ENCODE measurements at regions of chr2 and their contacts with region 1.

Region 1: GRCh38 chr2:37832590-37833197 is 92.4 kb upstream of the RMDN2 start:
- DNase-seq: peak; percentile 84
- H3K4me3 Mint-ChIP-seq: no peak overlapping the region
- H3K27ac Mint-ChIP-seq: no peak overlapping the region
- H3K4me1 Mint-ChIP-seq: peaks cover 37% of the 10 kb centered on the region
- H3K27me3 Mint-ChIP-seq: peaks cover 4% of the 10 kb centered on the region

Region 2: GRCh38 chr2:37397166-37397565 is 435.5 kb before region 1 on chr2:
- CTCF ChIA-PET with region 1: interaction called, 88 read pairs
- POLR2A ChIA-PET with region 1: no interaction called
- DNase-seq: no peak
- H3K4me3 Mint-ChIP-seq: no peak overlapping the region
- H3K27ac Mint-ChIP-seq: no peak overlapping the region
- H3K4me1 Mint-ChIP-seq: peaks cover 1% of the 10 kb centered on the region
- H3K27me3 Mint-ChIP-seq: peaks cover 5% of the 10 kb centered on the region

Region 3: DNA sequence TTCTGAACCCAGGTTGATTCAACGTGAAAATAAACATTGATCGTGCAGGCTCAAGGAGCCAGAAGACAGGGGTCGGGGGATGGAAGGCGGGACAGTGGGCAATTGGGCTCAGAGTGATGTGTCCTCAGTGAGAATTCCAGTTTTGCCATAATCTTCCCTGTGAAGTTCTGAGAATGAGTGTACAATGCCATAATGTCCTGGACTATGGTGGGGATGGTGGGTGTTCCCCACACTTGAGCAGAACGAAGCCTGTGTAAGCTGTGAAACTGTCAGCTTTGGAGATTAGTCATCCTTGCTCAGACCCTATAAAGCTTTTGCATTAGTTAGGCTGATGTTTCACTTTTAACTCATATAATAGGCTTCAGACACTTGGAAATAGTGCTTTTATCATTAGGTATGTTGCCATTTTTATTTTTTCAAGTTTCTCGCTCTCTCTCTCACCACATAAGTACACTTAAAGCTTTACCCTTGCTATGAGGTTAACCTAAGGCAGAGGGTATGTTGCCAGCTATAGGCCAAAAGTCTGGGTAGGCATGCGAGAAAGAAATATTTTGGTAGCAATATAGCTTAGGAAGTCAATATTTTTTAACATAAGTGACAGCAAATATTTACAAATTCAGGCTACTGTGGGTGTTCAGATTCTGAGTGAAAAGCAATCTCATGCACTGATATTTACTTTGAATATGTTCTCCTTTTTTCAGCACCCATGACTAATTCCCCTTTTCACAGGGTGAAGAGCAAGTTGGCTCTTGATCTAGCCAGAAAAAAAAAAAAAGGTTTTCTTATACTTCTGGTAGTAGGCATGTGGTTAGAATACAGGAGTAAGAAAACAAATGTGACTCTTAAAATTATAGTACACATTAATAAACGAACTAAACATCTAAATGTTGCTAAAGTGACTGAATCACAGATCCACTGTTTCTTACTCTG is 208.5 kb before region 1 on chr2:
- CTCF ChIA-PET with region 1: interaction called, 11 read pairs
- POLR2A ChIA-PET with region 1: no interaction called
- DNase-seq: peak; percentile 33
- H3K4me3 Mint-ChIP-seq: peak overlapping the region; percentile 28
- H3K27ac Mint-ChIP-seq: peak overlapping the region; percentile 91
- H3K4me1 Mint-ChIP-seq: peaks cover 53% of the 10 kb centered on the region
- H3K27me3 Mint-ChIP-seq: no peaks in the 10 kb centered on the region

Region 4: DNA sequence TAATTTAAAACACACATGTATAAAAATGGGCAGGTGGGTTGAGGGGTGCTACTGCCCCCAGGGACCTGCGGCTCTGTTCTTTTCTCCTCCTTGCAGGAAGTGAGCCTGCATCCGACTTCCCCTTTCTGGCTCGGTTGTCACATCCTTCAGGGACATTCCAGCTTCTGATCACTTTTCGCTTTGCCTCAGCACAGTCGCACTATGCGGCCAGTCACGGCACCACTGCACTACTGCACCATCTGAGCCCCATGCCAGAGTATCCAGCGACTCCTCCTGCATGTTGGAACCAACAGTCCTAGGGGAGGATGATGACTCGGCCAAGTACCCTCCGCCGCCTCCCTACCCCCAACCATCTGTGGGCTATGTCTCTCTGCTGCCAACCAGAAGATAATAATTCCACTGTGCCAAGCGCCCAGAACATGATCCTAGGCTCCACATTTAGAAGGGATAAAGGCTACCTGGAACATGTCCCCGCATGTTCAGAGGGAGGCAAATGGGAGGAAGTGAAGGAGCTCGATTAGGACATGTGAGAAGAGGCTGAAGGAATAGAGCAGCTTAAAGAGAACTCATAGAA is 178.8 kb before region 1 on chr2:
- CTCF ChIA-PET with region 1: interaction called, 10 read pairs
- POLR2A ChIA-PET with region 1: interaction called, 3 read pairs
- DNase-seq: no peak
- H3K4me3 Mint-ChIP-seq: peak overlapping the region; percentile 49
- H3K27ac Mint-ChIP-seq: peak overlapping the region; percentile 84
- H3K4me1 Mint-ChIP-seq: peaks cover 94% of the 10 kb centered on the region
- H3K27me3 Mint-ChIP-seq: no peaks in the 10 kb centered on the region

Region 5: GRCh38 chr2:37753758-37754157 is 78.9 kb before region 1 on chr2:
- CTCF ChIA-PET with region 1: no interaction called
- POLR2A ChIA-PET with region 1: no interaction called
- DNase-seq: no peak
- H3K4me3 Mint-ChIP-seq: no peak overlapping the region
- H3K27ac Mint-ChIP-seq: no peak overlapping the region
- H3K4me1 Mint-ChIP-seq: no peaks in the 10 kb centered on the region
- H3K27me3 Mint-ChIP-seq: no peaks in the 10 kb centered on the region

Region 6: GRCh38 chr2:37851828-37852584 is 19.3 kb after region 1 on chr2:
- CTCF ChIA-PET with region 1: interaction called, 11 read pairs
- POLR2A ChIA-PET with region 1: no interaction called
- DNase-seq: no peak
- H3K4me3 Mint-ChIP-seq: no peak overlapping the region
- H3K27ac Mint-ChIP-seq: peak overlapping the region; percentile 70
- H3K4me1 Mint-ChIP-seq: peaks cover 33% of the 10 kb centered on the region
- H3K27me3 Mint-ChIP-seq: no peaks in the 10 kb centered on the region

Region 7: GRCh38 chr2:37877457-37878315 is 45.0 kb after region 1 on chr2:
- CTCF ChIA-PET with region 1: interaction called, 42 read pairs
- POLR2A ChIA-PET with region 1: interaction called, 8 read pairs
- DNase-seq: no peak
- H3K4me3 Mint-ChIP-seq: no peak overlapping the region
- H3K27ac Mint-ChIP-seq: no peak overlapping the region
- H3K4me1 Mint-ChIP-seq: peaks cover 13% of the 10 kb centered on the region
- H3K27me3 Mint-ChIP-seq: peaks cover 2% of the 10 kb centered on the region

Region 8: GRCh38 chr2:37890893-37891495 is 58.3 kb after region 1 on chr2:
- CTCF ChIA-PET with region 1: no interaction called
- POLR2A ChIA-PET with region 1: no interaction called
- DNase-seq: peak; percentile 68
- H3K4me3 Mint-ChIP-seq: no peak overlapping the region
- H3K27ac Mint-ChIP-seq: no peak overlapping the region
- H3K4me1 Mint-ChIP-seq: peaks cover 29% of the 10 kb centered on the region
- H3K27me3 Mint-ChIP-seq: peaks cover 13% of the 10 kb centered on the region

Measured in activated CD4-positive, alpha-beta memory T cell treated with anti-CD3 and anti-CD28 coated beads, Interleukin-2, amount 10 ng/mL, durations not matched to agents 7 days and 5 days (primary cell).